Sigmoid colon (tissue), 7 donors: ENCODE measurements at regions of chr3 and their contacts with region 1.

Region 1: DNA sequence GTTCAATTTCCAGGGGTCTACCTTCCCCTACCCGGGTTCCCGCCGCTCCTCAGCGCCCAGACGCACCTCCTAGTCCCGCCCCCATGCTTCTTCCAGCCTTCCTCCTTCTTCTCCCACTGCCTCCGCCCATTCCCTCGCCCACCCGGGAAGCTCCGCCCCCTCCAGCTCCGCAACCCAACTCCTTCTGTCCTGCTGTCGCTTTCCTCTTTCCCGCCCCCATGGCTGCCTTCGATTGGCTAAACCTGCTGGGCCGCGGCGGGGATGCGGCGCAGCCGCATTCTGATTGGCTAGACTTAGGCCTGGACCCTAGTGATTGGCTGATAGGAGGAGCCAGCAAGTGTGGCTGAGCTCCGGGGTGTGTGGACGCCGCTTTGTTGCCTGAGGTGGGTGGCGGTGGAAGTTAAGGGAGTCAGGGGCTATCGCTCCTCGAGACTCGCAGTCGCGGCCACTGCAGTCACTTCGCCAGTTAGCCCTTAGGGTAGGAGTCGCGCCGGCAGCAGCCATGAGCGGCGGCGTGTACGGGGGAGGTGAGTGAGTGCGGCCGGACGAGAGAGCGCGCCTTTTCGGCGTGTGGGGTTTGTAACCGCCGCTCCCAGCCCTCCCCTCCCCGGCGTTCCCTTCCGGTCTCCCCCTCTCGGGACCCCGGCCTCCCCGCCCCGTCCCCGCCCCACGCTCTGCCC is at the start of gene ACTL6A:
- DNase-seq: peak; percentile 100
- H3K4me3 ChIP-seq: peak within 1 kb of the TSS; percentile 75 to 90 (median 79)
- H3K27ac ChIP-seq: peak within 1 kb of the TSS; percentile 83 to 92 (median 88)
- H3K4me1 ChIP-seq: peaks cover 0 to 17% (median 12%) of the 10 kb centered on the region in 4 donors
- H3K27me3 ChIP-seq: no peaks in the 10 kb centered on the region
- CTCF ChIP-seq: no peak
- EP300 ChIP-seq: no peak
- POLR2A ChIP-seq: peak; percentile 57 to 64
- total RNA-seq, gene ACTL6A: 28.8 to 65.7 (median 50.3) TPM

Region 2: DNA sequence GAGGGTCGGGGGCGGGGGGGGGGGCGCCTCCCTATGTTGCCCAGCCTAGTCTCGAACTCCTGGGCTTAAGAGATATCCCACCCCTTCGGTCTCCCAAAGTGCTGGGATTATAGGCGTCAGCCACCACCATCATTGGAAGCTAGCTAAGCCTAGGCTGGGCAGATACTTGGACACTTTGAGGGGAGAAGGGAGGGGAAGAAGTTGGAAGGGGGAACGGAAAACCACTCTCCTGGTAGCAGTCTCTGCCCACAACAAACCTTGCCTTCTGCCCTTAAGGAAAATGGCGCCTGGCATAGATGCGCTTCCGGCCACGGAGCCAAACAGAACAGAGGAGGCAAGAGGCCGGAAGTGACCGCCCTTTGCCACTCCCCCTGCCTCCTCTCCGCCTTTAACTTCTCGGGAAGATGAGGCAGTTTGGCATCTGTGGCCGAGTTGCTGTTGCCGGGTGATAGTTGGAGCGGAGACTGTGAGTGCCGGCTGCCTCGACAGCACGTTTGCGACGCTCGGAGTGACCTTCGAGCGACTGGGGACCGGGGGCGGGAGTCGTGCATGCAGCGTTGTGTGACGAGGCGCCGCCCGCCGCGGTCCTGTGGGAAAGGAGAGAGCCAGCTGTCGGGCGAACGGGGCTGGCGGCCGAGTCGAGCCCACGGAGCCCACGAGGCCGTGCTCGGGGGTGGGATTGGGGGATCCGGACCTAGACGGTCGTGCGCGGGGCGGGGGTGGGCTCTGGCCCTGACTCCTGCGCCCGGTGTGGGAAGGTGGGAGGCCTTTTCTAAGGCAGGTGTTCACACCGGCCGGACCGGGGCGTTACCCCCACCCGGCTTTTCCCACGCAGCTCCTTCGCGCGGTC is 215.2 kb before region 1 on chr3 and contains the start of gene MFN1:
- intact Hi-C with region 1: loop called (anchors 2 kb)
- DNase-seq: peak; percentile 98
- H3K4me3 ChIP-seq: peak within 1 kb of the TSS; percentile 72 to 85 (median 80)
- H3K27ac ChIP-seq: peak within 1 kb of the TSS; percentile 81 to 91 (median 88)
- H3K4me1 ChIP-seq: peaks cover 0 to 26% (median 13%) of the 10 kb centered on the region in 4 donors
- H3K27me3 ChIP-seq: no peaks in the 10 kb centered on the region
- CTCF ChIP-seq: no peak
- EP300 ChIP-seq: no peak
- POLR2A ChIP-seq: peak; percentile 22 to 61
- total RNA-seq, gene MFN1: 27.6 to 42.1 (median 37.0) TPM

Region 3: GRCh38 chr3:179398574-179399231 is 164.0 kb before region 1 on chr3:
- intact Hi-C with region 1: no loop called
- DNase-seq: no peak
- H3K4me3 ChIP-seq: no peak overlapping the region
- H3K27ac ChIP-seq: no peak overlapping the region
- H3K4me1 ChIP-seq: no peaks in the 10 kb centered on the region
- H3K27me3 ChIP-seq: no peaks in the 10 kb centered on the region
- CTCF ChIP-seq: no peak
- EP300 ChIP-seq: no peak
- POLR2A ChIP-seq: no peak

Region 4: DNA sequence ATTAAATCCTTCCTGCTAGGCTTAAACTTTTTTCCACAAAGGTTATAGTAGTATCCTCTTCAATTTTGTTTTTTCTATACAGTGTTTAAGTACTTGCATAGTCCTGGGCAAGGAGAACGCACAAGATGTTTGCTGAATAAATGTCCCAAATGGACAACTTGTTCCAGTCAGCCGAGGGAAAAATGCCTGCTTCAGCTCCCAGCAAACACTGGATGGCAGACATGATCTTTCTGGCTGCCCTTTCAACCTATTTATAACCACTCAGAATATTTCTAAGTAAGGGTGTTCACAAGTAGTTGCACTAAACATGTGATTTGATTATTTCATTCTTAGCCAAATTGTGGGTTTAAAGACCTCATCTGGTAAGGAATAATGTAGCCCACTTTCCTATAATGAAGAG is 141.2 kb before region 1 on chr3:
- intact Hi-C with region 1: loop called (anchors 2 kb)
- DNase-seq: no peak
- H3K4me3 ChIP-seq: no peak overlapping the region
- H3K27ac ChIP-seq: peak overlapping the region in 3 of 4 donors; percentile 9 to 21 (median 12)
- H3K4me1 ChIP-seq: peaks cover 0 to 12% (median 8%) of the 10 kb centered on the region in 4 donors
- H3K27me3 ChIP-seq: no peaks in the 10 kb centered on the region
- CTCF ChIP-seq: peak; percentile 18 to 61 (median 32)
- EP300 ChIP-seq: no peak
- POLR2A ChIP-seq: no peak

Region 5: GRCh38 chr3:179451265-179452175 is 111.2 kb before region 1 on chr3 and contains the start of gene GNB4:
- intact Hi-C with region 1: loop called (anchors 2 kb)
- DNase-seq: peak; percentile 88
- H3K4me3 ChIP-seq: peak within 1 kb of the TSS; percentile 63 to 84 (median 68)
- H3K27ac ChIP-seq: peak within 1 kb of the TSS; percentile 88 to 96 (median 94)
- H3K4me1 ChIP-seq: peaks cover 0 to 35% (median 25%) of the 10 kb centered on the region in 4 donors
- H3K27me3 ChIP-seq: no peaks in the 10 kb centered on the region
- CTCF ChIP-seq: no peak
- EP300 ChIP-seq: no peak
- POLR2A ChIP-seq: no peak
- total RNA-seq, gene GNB4: 32.5 to 44.3 (median 37.4) TPM

Region 6: GRCh38 chr3:179604321-179605078 is 41.8 kb after region 1 on chr3 and contains the starts of genes MRPL47 and NDUFB5:
- intact Hi-C with region 1: loop called (anchors 5 kb)
- DNase-seq: peak; percentile 97
- H3K4me3 ChIP-seq: peak within 1 kb of the TSS; percentile 78 to 88 (median 80)
- H3K27ac ChIP-seq: peak within 1 kb of the TSS; percentile 89 to 95 (median 92)
- H3K4me1 ChIP-seq: peaks cover 0 to 44% (median 28%) of the 10 kb centered on the region in 4 donors
- H3K27me3 ChIP-seq: no peaks in the 10 kb centered on the region
- CTCF ChIP-seq: no peak
- EP300 ChIP-seq: no peak
- POLR2A ChIP-seq: peak; percentile 90 to 91
- total RNA-seq, gene MRPL47: 26.0 to 58.5 (median 29.0) TPM
- total RNA-seq, gene NDUFB5: 107 to 216 (median 193) TPM